B cell (primary cell): ENCODE measurements at regions of chr5 and their contacts with region 1.

Region 1: DNA sequence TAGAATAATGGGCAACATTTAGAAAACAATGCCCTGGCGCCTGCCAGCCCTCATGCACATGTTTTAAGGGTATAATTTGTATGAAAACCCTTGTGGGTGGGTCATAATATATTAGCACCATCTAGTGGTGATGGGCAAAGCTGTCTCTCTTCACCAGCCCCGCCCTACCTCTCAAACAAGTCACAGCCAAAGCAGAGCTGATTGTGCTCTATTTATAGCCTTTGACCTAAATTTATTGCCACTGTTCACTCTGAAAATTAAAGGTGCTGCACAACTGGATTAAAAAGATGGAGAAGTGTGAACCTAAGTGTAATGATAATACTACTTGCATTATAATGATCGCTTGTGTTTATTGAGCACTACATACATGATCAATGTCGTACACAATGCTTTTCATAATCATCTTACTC is 131.9 kb upstream of the ANKH start:
- DNase-seq: peak; percentile 82
- ATAC-seq: peak; percentile 94
- H3K4me3 ChIP-seq: no peak overlapping the region
- H3K4me3 Mint-ChIP-seq: no peak overlapping the region
- H3K27ac ChIP-seq: no peak overlapping the region
- H3K27ac Mint-ChIP-seq: no peak overlapping the region
- H3K4me1 ChIP-seq: peaks cover 11 to 14% of the 10 kb centered on the region in 2 donors
- H3K4me1 Mint-ChIP-seq: peaks cover 16% of the 10 kb centered on the region
- H3K27me3 ChIP-seq: peaks cover 0 to 3% (median 0%) of the 10 kb centered on the region in 4 experiments
- H3K27me3 Mint-ChIP-seq: peaks cover 5% of the 10 kb centered on the region
- CTCF ChIP-seq: peak; percentile 89

Region 2: DNA sequence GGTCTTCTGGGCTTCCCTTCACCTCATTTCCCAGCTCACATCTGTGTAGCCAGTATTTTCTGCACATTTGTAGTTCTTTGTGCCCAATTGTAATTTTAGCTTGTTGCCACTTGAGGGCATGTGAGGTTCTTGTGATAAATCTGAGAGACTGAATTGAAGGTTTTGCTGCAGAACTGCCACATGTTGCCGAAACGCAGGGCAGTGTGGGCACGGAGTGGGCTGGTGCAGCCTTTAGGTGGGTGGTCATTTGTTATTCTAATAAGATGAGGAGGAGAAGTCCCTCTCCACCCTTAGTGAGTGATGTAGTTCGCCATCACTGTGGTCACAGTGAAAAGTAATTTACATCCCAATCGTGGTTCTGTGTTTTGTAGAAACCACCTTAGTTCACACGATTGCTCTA is 317.8 kb before region 1 on chr5:
- CTCF ChIA-PET with region 1: interaction called, 63 read pairs
- POLR2A ChIA-PET with region 1: no interaction called
- intact Hi-C with region 1: loop called (anchors 1 kb)
- DNase-seq: peak; percentile 70
- ATAC-seq: peak; percentile 79
- H3K4me3 ChIP-seq: no peak overlapping the region
- H3K4me3 Mint-ChIP-seq: peak overlapping the region; percentile 8
- H3K27ac ChIP-seq: no peak overlapping the region
- H3K27ac Mint-ChIP-seq: no peak overlapping the region
- H3K4me1 ChIP-seq: peaks cover 5 to 10% of the 10 kb centered on the region in 2 donors
- H3K4me1 Mint-ChIP-seq: peaks cover 9% of the 10 kb centered on the region
- H3K27me3 ChIP-seq: no peaks in the 10 kb centered on the region
- H3K27me3 Mint-ChIP-seq: no peaks in the 10 kb centered on the region
- CTCF ChIP-seq: peak; percentile 74

Region 3: GRCh38 chr5:14698495-14698894 is 305.0 kb before region 1 on chr5:
- CTCF ChIA-PET with region 1: no interaction called
- POLR2A ChIA-PET with region 1: no interaction called
- intact Hi-C with region 1: no loop called
- DNase-seq: no peak
- ATAC-seq: no peak
- H3K4me3 ChIP-seq: no peak overlapping the region
- H3K4me3 Mint-ChIP-seq: no peak overlapping the region
- H3K27ac ChIP-seq: no peak overlapping the region
- H3K27ac Mint-ChIP-seq: no peak overlapping the region
- H3K4me1 ChIP-seq: peaks cover 0 to 8% of the 10 kb centered on the region in 2 donors
- H3K4me1 Mint-ChIP-seq: peaks cover 5% of the 10 kb centered on the region
- H3K27me3 ChIP-seq: no peaks in the 10 kb centered on the region
- H3K27me3 Mint-ChIP-seq: no peaks in the 10 kb centered on the region
- CTCF ChIP-seq: no peak

Region 4: GRCh38 chr5:14946815-14947640 is 56.5 kb before region 1 on chr5:
- CTCF ChIA-PET with region 1: interaction called, 31 read pairs
- POLR2A ChIA-PET with region 1: no interaction called
- intact Hi-C with region 1: loop called (anchors 1 kb)
- DNase-seq: peak; percentile 67
- ATAC-seq: peak; percentile 80
- H3K4me3 ChIP-seq: no peak overlapping the region
- H3K4me3 Mint-ChIP-seq: no peak overlapping the region
- H3K27ac ChIP-seq: no peak overlapping the region
- H3K27ac Mint-ChIP-seq: no peak overlapping the region
- H3K4me1 ChIP-seq: no peaks in the 10 kb centered on the region
- H3K4me1 Mint-ChIP-seq: no peaks in the 10 kb centered on the region
- H3K27me3 ChIP-seq: peaks cover 0 to 9% (median 2%) of the 10 kb centered on the region in 4 experiments
- H3K27me3 Mint-ChIP-seq: peaks cover 28% of the 10 kb centered on the region
- CTCF ChIP-seq: peak; percentile 69

Region 5: GRCh38 chr5:14983666-14984441 is 19.7 kb before region 1 on chr5:
- CTCF ChIA-PET with region 1: interaction called, 13 read pairs
- POLR2A ChIA-PET with region 1: no interaction called
- intact Hi-C with region 1: no loop called
- DNase-seq: no peak
- ATAC-seq: peak; percentile 33
- H3K4me3 ChIP-seq: no peak overlapping the region
- H3K4me3 Mint-ChIP-seq: no peak overlapping the region
- H3K27ac ChIP-seq: no peak overlapping the region
- H3K27ac Mint-ChIP-seq: no peak overlapping the region
- H3K4me1 ChIP-seq: peaks cover 4 to 6% of the 10 kb centered on the region in 2 donors
- H3K4me1 Mint-ChIP-seq: peaks cover 3% of the 10 kb centered on the region
- H3K27me3 ChIP-seq: no peaks in the 10 kb centered on the region
- H3K27me3 Mint-ChIP-seq: peaks cover 13% of the 10 kb centered on the region
- CTCF ChIP-seq: no peak

Region 6: GRCh38 chr5:15037247-15037908 is 33.9 kb after region 1 on chr5:
- CTCF ChIA-PET with region 1: no interaction called
- POLR2A ChIA-PET with region 1: no interaction called
- intact Hi-C with region 1: no loop called
- DNase-seq: no peak
- ATAC-seq: no peak
- H3K4me3 ChIP-seq: no peak overlapping the region
- H3K4me3 Mint-ChIP-seq: no peak overlapping the region
- H3K27ac ChIP-seq: no peak overlapping the region
- H3K27ac Mint-ChIP-seq: no peak overlapping the region
- H3K4me1 ChIP-seq: no peaks in the 10 kb centered on the region
- H3K4me1 Mint-ChIP-seq: no peaks in the 10 kb centered on the region
- H3K27me3 ChIP-seq: no peaks in the 10 kb centered on the region
- H3K27me3 Mint-ChIP-seq: peaks cover 21% of the 10 kb centered on the region
- CTCF ChIP-seq: no peak